ENCODE measurements at regions of chr17 and their contacts with region 1.

Region 1: DNA sequence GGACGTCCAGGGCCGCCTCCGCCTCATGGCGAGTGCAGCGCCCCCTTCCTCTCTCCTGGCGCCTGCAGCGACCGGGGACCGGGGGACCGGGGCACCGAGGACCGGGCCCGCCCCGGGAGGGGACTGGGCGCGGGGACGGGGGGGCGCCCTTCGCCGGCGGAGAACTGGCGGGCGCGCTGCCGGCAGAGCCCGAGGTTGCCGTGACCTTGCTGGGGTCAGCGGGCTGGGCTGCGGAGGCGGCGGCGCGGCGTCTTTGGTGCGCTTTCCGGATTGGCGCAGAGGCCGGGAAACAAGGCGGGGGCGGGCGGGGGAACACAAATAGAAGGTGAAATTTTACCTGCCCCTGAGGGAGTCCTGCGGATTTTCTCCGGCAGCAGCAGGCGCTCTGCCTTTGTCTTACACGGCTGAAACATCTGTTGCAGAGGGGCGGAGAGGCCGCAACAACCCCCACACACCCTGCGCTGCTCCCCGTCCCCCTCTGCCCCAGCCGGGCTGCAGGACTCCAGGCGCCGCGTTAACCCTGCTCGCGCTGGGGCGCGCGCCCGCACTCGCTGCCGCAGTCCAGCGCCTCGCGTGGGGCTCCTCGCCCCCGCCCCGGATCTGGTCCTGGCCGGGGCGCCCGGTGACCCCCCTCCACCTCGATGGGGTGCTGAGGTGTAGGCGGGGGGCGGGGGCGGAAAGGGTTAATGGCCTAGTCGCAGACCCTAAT is 53.5 kb downstream of the SREBF1 start:
- DNase-seq: no peak
- H3K4me3 ChIP-seq: peak overlapping the region; percentile 21 to 56 (median 55)
- H3K27ac ChIP-seq: peak overlapping the region; percentile 87 to 93 (median 92)
- H3K4me1 ChIP-seq: peaks cover 2 to 81% (median 71%) of the 10 kb centered on the region in 4 donors
- H3K27me3 ChIP-seq: no peaks in the 10 kb centered on the region
- CTCF ChIP-seq: no peak
- EP300 ChIP-seq: no peak
- POLR2A ChIP-seq: no peak

Region 2: DNA sequence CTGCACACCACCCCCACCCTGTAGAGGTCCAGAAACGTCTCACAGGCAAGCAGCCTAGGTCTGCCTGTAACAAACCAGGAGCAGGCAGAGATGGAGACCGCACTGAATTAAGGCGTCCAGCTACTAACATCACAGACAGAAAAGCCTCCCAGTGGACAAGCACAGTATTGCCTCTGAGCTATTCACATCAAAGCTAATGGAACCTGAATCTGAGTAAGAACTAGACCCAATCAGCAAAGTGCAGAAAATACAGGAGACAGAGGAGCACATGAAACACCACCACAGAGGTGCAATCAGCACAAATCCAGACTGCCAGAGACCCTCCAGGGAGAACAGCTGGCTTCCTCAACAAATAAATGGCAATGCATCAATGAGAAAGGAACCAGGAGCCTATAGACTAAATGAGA is 169.6 kb before region 1 on chr17:
- intact Hi-C with region 1: no loop called
- DNase-seq: no peak
- H3K4me3 ChIP-seq: no peak overlapping the region
- H3K27ac ChIP-seq: no peak overlapping the region
- H3K4me1 ChIP-seq: no peaks in the 10 kb centered on the region
- H3K27me3 ChIP-seq: no peaks in the 10 kb centered on the region
- CTCF ChIP-seq: peak; percentile 32 to 79 (median 64)
- EP300 ChIP-seq: no peak
- POLR2A ChIP-seq: no peak

Region 3: GRCh38 chr17:17739388-17740066 is 43.7 kb before region 1 on chr17:
- intact Hi-C with region 1: loop called (anchors 5 kb)
- DNase-seq: peak; percentile 88
- H3K4me3 ChIP-seq: no peak overlapping the region
- H3K27ac ChIP-seq: peak overlapping the region; percentile 76 to 90 (median 80)
- H3K4me1 ChIP-seq: peaks cover 0 to 68% (median 61%) of the 10 kb centered on the region in 4 donors
- H3K27me3 ChIP-seq: no peaks in the 10 kb centered on the region
- CTCF ChIP-seq: no peak
- EP300 ChIP-seq: peak in 1 of 4 donors; percentile 22
- POLR2A ChIP-seq: no peak

Region 4: DNA sequence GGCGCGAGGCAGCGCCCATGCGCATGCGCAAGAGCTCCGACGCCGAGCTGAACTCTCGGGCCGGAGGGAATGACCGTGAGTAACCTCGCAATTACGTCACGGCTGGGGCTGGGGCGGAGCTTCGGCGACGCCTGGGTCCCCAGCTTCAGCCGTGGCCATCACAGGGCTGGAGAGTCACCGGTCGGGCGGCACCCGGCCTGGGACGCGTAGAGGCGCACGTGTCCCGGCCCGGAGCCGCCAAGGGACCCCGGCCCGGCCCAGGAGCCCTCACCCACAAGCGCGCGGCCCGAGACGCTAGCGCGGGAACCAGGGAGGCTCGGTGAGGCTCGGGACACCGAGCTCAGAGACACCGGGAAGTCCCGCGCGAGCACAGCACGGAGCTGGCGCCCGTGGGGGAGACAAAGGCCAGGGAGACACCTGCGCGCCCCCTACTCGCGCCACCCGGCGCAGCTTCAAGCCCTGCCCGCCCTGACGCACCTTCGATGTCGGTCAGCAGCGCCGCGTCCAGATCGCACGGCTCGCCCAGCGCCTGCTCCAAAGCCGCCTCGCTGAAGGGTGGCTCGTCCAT is 53.1 kb after region 1 on chr17:
- intact Hi-C with region 1: loop called (anchors 2 kb)
- DNase-seq: peak; percentile 99
- H3K4me3 ChIP-seq: peak overlapping the region; percentile 84 to 95 (median 92)
- H3K27ac ChIP-seq: peak overlapping the region; percentile 99 to 100 (median 100)
- H3K4me1 ChIP-seq: peaks cover 0 to 84% (median 80%) of the 10 kb centered on the region in 4 donors
- H3K27me3 ChIP-seq: no peaks in the 10 kb centered on the region
- CTCF ChIP-seq: no peak
- EP300 ChIP-seq: peak in 2 of 4 donors; percentile 33 to 88
- POLR2A ChIP-seq: peak; percentile 94 to 99

Measured in sigmoid colon (tissue), 7 donors.